H1 (cell line): ENCODE measurements at regions of chr11 and their contacts with region 1.

Region 1: GRCh38 chr11:10307442-10308207 is 2.8 kb downstream of the ADM start:
- DNase-seq: peak in 1 of 2 experiments; percentile 93
- H3K4me3 ChIP-seq: peak overlapping the region; percentile 70 to 92 (median 88)
- H3K27ac ChIP-seq: peak overlapping the region; percentile 34; the same call in 1 of the 2 replicates
- H3K4me1 ChIP-seq: peaks cover 6 to 22% (median 7%) of the 10 kb centered on the region in 4 experiments
- H3K27me3 ChIP-seq: peaks cover 0 to 36% (median 6%) of the 10 kb centered on the region in 4 experiments; a peak in 4 of 7 replicates
- CTCF ChIP-seq: peak; percentile 78 to 92 (median 80)
- EP300 ChIP-seq: peak in 1 of 2 experiments; percentile 87; a peak in 1 of 3 replicates
- POLR2A ChIP-seq: peak in 1 of 2 experiments; percentile 89; a peak in 2 of 3 replicates
- RAD21 ChIP-seq: peak; percentile 87 to 90

Region 2: GRCh38 chr11:10076458-10077141 is 231.0 kb before region 1 on chr11:
- CTCF ChIA-PET with region 1: interaction called, 5 read pairs
- POLR2A ChIA-PET with region 1: interaction called, 13 read pairs
- DNase-seq: peak; percentile 23 to 84
- H3K4me3 ChIP-seq: no peak overlapping the region
- H3K27ac ChIP-seq: no peak overlapping the region
- H3K4me1 ChIP-seq: peaks cover 0 to 4% (median 0%) of the 10 kb centered on the region in 4 experiments; a peak in 4 of 7 replicates
- H3K27me3 ChIP-seq: no peaks in the 10 kb centered on the region
- CTCF ChIP-seq: peak; percentile 81 to 93 (median 88)
- EP300 ChIP-seq: no peak
- POLR2A ChIP-seq: no peak
- RAD21 ChIP-seq: peak; percentile 73 to 80

Region 3: GRCh38 chr11:10293423-10294289 is 14.0 kb before region 1 on chr11 and contains the start of gene SBF2:
- CTCF ChIA-PET with region 1: interaction called, 35 read pairs
- POLR2A ChIA-PET with region 1: interaction called, 156 read pairs
- DNase-seq: peak in 1 of 2 experiments; percentile 93
- H3K4me3 ChIP-seq: peak within 1 kb of the TSS; percentile 74 to 95 (median 80)
- H3K27ac ChIP-seq: peak within 1 kb of the TSS; percentile 77
- H3K4me1 ChIP-seq: peaks cover 3 to 17% (median 10%) of the 10 kb centered on the region in 4 experiments
- H3K27me3 ChIP-seq: no peaks in the 10 kb centered on the region
- CTCF ChIP-seq: no peak
- EP300 ChIP-seq: no peak
- POLR2A ChIP-seq: peak; percentile 12 to 75
- RAD21 ChIP-seq: no peak
- total RNA-seq, gene SBF2: 50.5 and 54.1 TPM in 2 replicates

Region 4: DNA sequence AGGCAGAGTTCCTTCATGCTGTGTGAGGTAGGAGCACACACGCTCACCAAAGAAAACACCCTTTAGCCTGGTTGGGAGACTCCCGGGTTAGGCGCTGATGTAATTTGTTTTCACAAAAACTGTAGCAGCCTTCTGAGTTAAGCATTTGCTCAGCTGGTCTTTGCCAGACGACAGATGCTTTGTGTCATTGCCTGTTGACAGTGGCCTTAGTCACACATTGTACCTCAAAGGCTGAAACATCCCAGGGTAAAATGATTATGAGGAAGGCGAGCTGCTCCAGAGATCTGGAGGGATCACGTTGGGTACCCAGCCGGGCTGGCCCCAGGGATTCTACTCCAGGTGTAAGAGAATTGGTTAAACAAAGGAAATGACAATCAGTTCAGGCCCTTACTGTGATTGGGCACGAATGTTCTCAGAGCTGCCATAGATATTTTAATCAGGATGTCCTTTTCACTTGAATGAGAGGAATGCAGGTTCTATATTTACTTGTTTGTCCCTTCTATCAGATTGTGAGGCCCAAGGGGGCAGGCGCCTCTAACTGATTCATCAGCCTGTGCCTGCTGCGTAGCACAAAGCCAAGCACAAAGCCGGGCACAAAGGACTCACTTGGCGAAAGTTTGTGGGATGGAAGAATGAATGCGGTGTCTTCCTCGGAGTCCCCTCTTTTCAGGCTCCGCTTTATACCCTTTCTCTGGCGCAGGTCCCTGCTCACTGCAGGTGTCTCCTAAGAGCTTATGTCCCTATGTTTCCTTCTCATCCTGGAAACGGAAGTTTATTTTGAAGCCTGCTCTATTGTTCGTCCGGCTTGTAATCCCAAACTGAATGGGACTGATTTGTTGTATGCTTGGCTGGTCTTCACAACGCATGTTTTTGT is 44.4 kb after region 1 on chr11:
- CTCF ChIA-PET with region 1: interaction called, 16 read pairs
- POLR2A ChIA-PET with region 1: interaction called, 129 read pairs
- DNase-seq: peak; percentile 85 to 98
- H3K4me3 ChIP-seq: peak overlapping the region in 2 of 4 experiments; percentile 3 to 35; a peak in 1 of 8 replicates
- H3K27ac ChIP-seq: peak overlapping the region; percentile 95
- H3K4me1 ChIP-seq: peaks cover 5 to 25% (median 16%) of the 10 kb centered on the region in 4 experiments; a peak in 6 of 7 replicates
- H3K27me3 ChIP-seq: no peaks in the 10 kb centered on the region; a peak in 1 of 7 replicates
- CTCF ChIP-seq: no peak
- EP300 ChIP-seq: peak; percentile 17 to 93
- POLR2A ChIP-seq: peak; percentile 55 to 70
- RAD21 ChIP-seq: peak in 1 of 2 experiments; percentile 17; a peak in 1 of 4 replicates

Region 5: DNA sequence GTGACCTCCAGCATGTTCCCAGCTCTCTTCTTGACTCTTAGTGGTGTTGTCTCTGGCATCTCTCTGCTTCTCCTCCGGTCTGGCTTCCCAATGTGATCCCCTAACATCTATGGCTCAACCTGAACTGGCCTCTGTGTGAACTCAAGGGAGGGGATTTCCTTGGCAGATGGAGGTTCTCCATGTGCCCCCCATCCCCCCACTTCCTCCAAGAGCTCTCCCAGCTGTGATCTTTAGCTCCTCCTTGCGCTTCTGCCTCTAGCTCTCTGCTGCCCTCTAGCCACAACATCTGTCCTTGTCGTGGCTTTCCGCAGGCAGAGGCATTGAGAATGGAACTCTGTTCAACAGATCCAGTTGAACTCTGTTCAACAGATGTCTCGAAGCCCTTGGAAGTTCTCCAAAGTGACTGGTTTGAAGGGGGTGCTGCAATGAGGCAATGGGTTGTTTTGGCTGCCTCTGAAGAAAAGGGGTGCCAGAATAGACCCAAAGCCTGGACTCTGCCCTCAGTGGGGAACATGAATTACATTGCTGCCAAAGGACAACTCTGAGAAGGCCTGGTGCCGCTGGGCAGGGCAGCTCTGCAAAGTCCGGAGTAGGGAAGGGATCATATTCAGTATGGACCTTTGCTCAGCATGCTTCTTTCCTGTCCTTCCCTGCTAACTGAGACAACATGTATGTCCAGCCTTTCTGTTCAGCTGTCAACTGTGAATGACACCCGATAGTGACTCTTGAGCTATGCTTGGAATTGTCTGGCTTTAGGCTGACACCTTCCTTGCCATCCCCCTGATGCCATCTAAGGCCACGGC is 59.1 kb after region 1 on chr11:
- CTCF ChIA-PET with region 1: interaction called, 97 read pairs
- POLR2A ChIA-PET with region 1: interaction called, 51 read pairs
- DNase-seq: peak; percentile 87 to 90
- H3K4me3 ChIP-seq: no peak overlapping the region
- H3K27ac ChIP-seq: peak overlapping the region; percentile 4; the same call in 1 of the 2 replicates
- H3K4me1 ChIP-seq: peaks cover 0 to 10% (median 1%) of the 10 kb centered on the region in 4 experiments; a peak in 3 of 7 replicates
- H3K27me3 ChIP-seq: no peaks in the 10 kb centered on the region
- CTCF ChIP-seq: peak; percentile 87 to 99 (median 87)
- EP300 ChIP-seq: peak in 1 of 2 experiments; percentile 60; a peak in 1 of 3 replicates
- POLR2A ChIP-seq: no peak
- RAD21 ChIP-seq: peak; percentile 95 to 98